ENCODE measurements at regions of chr13 and their contacts with region 1.

Region 1: GRCh38 chr13:22944378-22944777 is 236.4 kb upstream of the SGCG start:
- DNase-seq: no peak
- H3K4me3 ChIP-seq: no peak overlapping the region
- H3K27ac ChIP-seq: no peak overlapping the region
- H3K4me1 ChIP-seq: no peaks in the 10 kb centered on the region
- H3K27me3 ChIP-seq: no peaks in the 10 kb centered on the region
- CTCF ChIP-seq: no peak
- POLR2A ChIP-seq: no peak

Region 2: GRCh38 chr13:23007426-23007825 is 63.0 kb after region 1 on chr13:
- intact Hi-C with region 1: no loop called
- DNase-seq: peak in 1 of 2 donors; percentile 23
- H3K4me3 ChIP-seq: no peak overlapping the region
- H3K27ac ChIP-seq: no peak overlapping the region
- H3K4me1 ChIP-seq: peaks cover 0 to 4% of the 10 kb centered on the region in 2 donors
- H3K27me3 ChIP-seq: no peaks in the 10 kb centered on the region
- CTCF ChIP-seq: no peak
- POLR2A ChIP-seq: no peak

Region 3: DNA sequence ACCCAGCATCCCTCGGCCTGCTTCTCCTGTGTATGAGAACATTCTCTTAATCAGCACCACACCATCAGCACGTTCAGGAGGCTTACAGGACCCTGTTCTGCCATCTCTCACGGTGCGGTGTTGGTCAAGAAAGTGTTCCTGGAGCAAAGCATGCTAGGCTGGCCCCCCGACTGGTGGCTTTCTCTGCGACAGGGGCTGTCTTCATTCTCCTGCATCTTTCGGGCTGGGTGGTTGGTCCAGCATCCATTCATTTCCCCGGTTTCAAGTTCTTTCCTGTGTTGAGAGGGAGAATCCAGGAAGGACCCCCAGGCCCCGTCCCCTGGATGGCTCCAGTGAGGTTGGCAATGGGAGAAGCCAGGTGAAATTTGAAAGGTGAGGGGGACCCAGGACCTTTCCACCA is 1420.8 kb after region 1 on chr13:
- intact Hi-C with region 1: loop called (anchors 5 kb)
- DNase-seq: no peak
- H3K4me3 ChIP-seq: no peak overlapping the region
- H3K27ac ChIP-seq: no peak overlapping the region
- H3K4me1 ChIP-seq: no peaks in the 10 kb centered on the region
- H3K27me3 ChIP-seq: no peaks in the 10 kb centered on the region
- CTCF ChIP-seq: no peak
- POLR2A ChIP-seq: no peak